ENCODE measurements at regions of chr7 and their contacts with region 1.

Region 1: DNA sequence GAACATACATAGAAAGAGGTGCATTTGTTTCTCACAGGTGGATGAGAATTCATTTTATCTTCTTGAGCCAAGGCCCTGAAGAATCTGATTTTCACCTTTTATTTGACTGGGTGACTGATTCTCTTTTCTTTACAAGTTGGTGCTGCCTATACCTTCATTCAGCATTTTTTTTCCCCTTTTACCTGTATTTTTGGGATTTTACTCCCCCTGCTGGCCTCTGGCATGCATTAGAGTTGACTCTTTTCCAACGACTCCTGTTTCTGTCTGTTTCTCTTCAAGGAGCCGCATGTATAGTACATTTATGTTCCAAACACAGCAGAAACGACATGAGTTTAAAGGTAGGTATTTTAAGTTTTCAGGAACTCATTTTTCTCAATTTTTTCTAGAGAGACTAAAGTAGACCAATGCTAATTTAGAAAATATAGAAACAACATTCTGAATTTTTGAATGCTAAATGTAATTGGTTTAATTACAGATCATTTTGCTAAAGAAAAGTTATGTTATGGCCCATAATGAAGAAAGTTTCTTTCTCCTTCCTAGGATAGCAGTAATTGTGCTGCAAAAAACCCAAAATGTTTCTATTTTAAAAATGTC is 149.8 kb upstream of the HDAC9 start:
- DNase-seq: peak; percentile 73
- ATAC-seq: peak; percentile 64
- H3K4me3 ChIP-seq: no peak overlapping the region
- H3K4me3 Mint-ChIP-seq: no peak overlapping the region
- H3K27ac ChIP-seq: no peak overlapping the region
- H3K27ac Mint-ChIP-seq: no peak overlapping the region
- H3K4me1 ChIP-seq: peaks cover 20 to 26% of the 10 kb centered on the region in 2 donors
- H3K4me1 Mint-ChIP-seq: peaks cover 40% of the 10 kb centered on the region
- H3K27me3 ChIP-seq: no peaks in the 10 kb centered on the region
- H3K27me3 Mint-ChIP-seq: no peaks in the 10 kb centered on the region
- CTCF ChIP-seq: peak; percentile 90

Region 2: GRCh38 chr7:17680943-17681351 is 664.8 kb before region 1 on chr7:
- CTCF ChIA-PET with region 1: interaction called, 69 read pairs
- POLR2A ChIA-PET with region 1: no interaction called
- intact Hi-C with region 1: loop called (anchors 1 kb)
- DNase-seq: peak; percentile 41
- ATAC-seq: no peak
- H3K4me3 ChIP-seq: no peak overlapping the region
- H3K4me3 Mint-ChIP-seq: no peak overlapping the region
- H3K27ac ChIP-seq: no peak overlapping the region
- H3K27ac Mint-ChIP-seq: no peak overlapping the region
- H3K4me1 ChIP-seq: no peaks in the 10 kb centered on the region
- H3K4me1 Mint-ChIP-seq: no peaks in the 10 kb centered on the region
- H3K27me3 ChIP-seq: no peaks in the 10 kb centered on the region
- H3K27me3 Mint-ChIP-seq: no peaks in the 10 kb centered on the region
- CTCF ChIP-seq: peak; percentile 84

Region 3: GRCh38 chr7:17769918-17770317 is 575.8 kb before region 1 on chr7:
- CTCF ChIA-PET with region 1: interaction called, 31 read pairs
- POLR2A ChIA-PET with region 1: no interaction called
- intact Hi-C with region 1: loop called (anchors 1 kb)
- DNase-seq: peak; percentile 54
- ATAC-seq: peak; percentile 33
- H3K4me3 ChIP-seq: no peak overlapping the region
- H3K4me3 Mint-ChIP-seq: no peak overlapping the region
- H3K27ac ChIP-seq: no peak overlapping the region
- H3K27ac Mint-ChIP-seq: no peak overlapping the region
- H3K4me1 ChIP-seq: peaks cover 0 to 13% of the 10 kb centered on the region in 2 donors
- H3K4me1 Mint-ChIP-seq: peaks cover 8% of the 10 kb centered on the region
- H3K27me3 ChIP-seq: no peaks in the 10 kb centered on the region
- H3K27me3 Mint-ChIP-seq: no peaks in the 10 kb centered on the region
- CTCF ChIP-seq: peak; percentile 61

Region 4: GRCh38 chr7:18064242-18064838 is 281.4 kb before region 1 on chr7:
- CTCF ChIA-PET with region 1: interaction called, 8 read pairs
- POLR2A ChIA-PET with region 1: no interaction called
- intact Hi-C with region 1: loop called (anchors 1 kb)
- DNase-seq: peak; percentile 38
- ATAC-seq: no peak
- H3K4me3 ChIP-seq: no peak overlapping the region
- H3K4me3 Mint-ChIP-seq: no peak overlapping the region
- H3K27ac ChIP-seq: no peak overlapping the region
- H3K27ac Mint-ChIP-seq: no peak overlapping the region
- H3K4me1 ChIP-seq: no peaks in the 10 kb centered on the region
- H3K4me1 Mint-ChIP-seq: no peaks in the 10 kb centered on the region
- H3K27me3 ChIP-seq: no peaks in the 10 kb centered on the region
- H3K27me3 Mint-ChIP-seq: peaks cover 4% of the 10 kb centered on the region
- CTCF ChIP-seq: peak; percentile 58

Region 5: GRCh38 chr7:18265611-18266281 is 80.0 kb before region 1 on chr7:
- CTCF ChIA-PET with region 1: no interaction called
- POLR2A ChIA-PET with region 1: no interaction called
- intact Hi-C with region 1: no loop called
- DNase-seq: no peak
- ATAC-seq: no peak
- H3K4me3 ChIP-seq: no peak overlapping the region
- H3K4me3 Mint-ChIP-seq: no peak overlapping the region
- H3K27ac ChIP-seq: no peak overlapping the region
- H3K27ac Mint-ChIP-seq: no peak overlapping the region
- H3K4me1 ChIP-seq: peaks cover 0 to 5% of the 10 kb centered on the region in 2 donors
- H3K4me1 Mint-ChIP-seq: peaks cover 4% of the 10 kb centered on the region
- H3K27me3 ChIP-seq: no peaks in the 10 kb centered on the region
- H3K27me3 Mint-ChIP-seq: no peaks in the 10 kb centered on the region
- CTCF ChIP-seq: no peak

Region 6: DNA sequence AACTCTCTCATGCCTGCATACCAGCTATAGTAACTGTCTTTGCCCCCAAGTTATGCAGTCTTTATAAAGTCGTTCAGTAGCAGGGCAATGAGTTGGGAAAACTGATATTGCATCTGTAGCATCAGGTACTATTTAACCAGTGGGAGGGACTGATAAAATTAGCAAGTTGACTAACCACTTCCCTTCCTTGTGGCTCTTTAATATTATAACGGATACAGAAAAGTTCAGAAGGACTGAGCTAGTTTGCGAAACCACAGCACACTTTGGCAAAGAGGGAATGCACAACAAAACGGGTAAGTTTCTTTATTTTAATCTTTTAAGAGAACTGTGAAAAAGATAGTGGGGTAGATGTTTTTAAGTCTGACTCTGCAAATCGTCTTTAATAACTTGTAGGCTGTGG is 55.5 kb before region 1 on chr7:
- CTCF ChIA-PET with region 1: interaction called, 25 read pairs
- POLR2A ChIA-PET with region 1: no interaction called
- intact Hi-C with region 1: no loop called
- DNase-seq: peak; percentile 36
- ATAC-seq: no peak
- H3K4me3 ChIP-seq: peak overlapping the region; percentile 48 to 92 (median 65)
- H3K4me3 Mint-ChIP-seq: peak overlapping the region; percentile 89
- H3K27ac ChIP-seq: peak overlapping the region; percentile 48 to 74
- H3K27ac Mint-ChIP-seq: peak overlapping the region; percentile 87
- H3K4me1 ChIP-seq: peaks cover 43 to 52% of the 10 kb centered on the region in 2 donors
- H3K4me1 Mint-ChIP-seq: peaks cover 58% of the 10 kb centered on the region
- H3K27me3 ChIP-seq: no peaks in the 10 kb centered on the region
- H3K27me3 Mint-ChIP-seq: no peaks in the 10 kb centered on the region
- CTCF ChIP-seq: no peak

Region 7: GRCh38 chr7:18666107-18666728 is 320.5 kb after region 1 on chr7:
- CTCF ChIA-PET with region 1: interaction called, 295 read pairs
- POLR2A ChIA-PET with region 1: no interaction called
- intact Hi-C with region 1: no loop called
- DNase-seq: peak; percentile 85
- ATAC-seq: peak; percentile 98
- H3K4me3 ChIP-seq: no peak overlapping the region
- H3K4me3 Mint-ChIP-seq: no peak overlapping the region
- H3K27ac ChIP-seq: peak overlapping the region in 1 of 2 donors; percentile 54
- H3K27ac Mint-ChIP-seq: peak overlapping the region; percentile 2
- H3K4me1 ChIP-seq: peaks cover 0 to 17% of the 10 kb centered on the region in 2 donors
- H3K4me1 Mint-ChIP-seq: peaks cover 10% of the 10 kb centered on the region
- H3K27me3 ChIP-seq: no peaks in the 10 kb centered on the region
- H3K27me3 Mint-ChIP-seq: no peaks in the 10 kb centered on the region
- CTCF ChIP-seq: peak; percentile 99